ENCODE measurements at regions of chr12 and their contacts with region 1.

Region 1: GRCh38 chr12:92505254-92506231 is 197.2 kb upstream of the PLEKHG7 start:
- DNase-seq: peak; percentile 86
- ATAC-seq: peak; percentile 41
- H3K4me3 ChIP-seq: peak overlapping the region; percentile 46
- H3K27ac ChIP-seq: peak overlapping the region; percentile 100
- H3K4me1 ChIP-seq: peaks cover 53% of the 10 kb centered on the region
- H3K27me3 ChIP-seq: no peaks in the 10 kb centered on the region
- CTCF ChIP-seq: no peak
- EP300 ChIP-seq: peak; percentile 15 to 44; a peak in 2 of 4 replicates
- POLR2A ChIP-seq: peak; percentile 56; the same call in 1 of the 2 replicates
- RAD21 ChIP-seq: no peak

Region 2: DNA sequence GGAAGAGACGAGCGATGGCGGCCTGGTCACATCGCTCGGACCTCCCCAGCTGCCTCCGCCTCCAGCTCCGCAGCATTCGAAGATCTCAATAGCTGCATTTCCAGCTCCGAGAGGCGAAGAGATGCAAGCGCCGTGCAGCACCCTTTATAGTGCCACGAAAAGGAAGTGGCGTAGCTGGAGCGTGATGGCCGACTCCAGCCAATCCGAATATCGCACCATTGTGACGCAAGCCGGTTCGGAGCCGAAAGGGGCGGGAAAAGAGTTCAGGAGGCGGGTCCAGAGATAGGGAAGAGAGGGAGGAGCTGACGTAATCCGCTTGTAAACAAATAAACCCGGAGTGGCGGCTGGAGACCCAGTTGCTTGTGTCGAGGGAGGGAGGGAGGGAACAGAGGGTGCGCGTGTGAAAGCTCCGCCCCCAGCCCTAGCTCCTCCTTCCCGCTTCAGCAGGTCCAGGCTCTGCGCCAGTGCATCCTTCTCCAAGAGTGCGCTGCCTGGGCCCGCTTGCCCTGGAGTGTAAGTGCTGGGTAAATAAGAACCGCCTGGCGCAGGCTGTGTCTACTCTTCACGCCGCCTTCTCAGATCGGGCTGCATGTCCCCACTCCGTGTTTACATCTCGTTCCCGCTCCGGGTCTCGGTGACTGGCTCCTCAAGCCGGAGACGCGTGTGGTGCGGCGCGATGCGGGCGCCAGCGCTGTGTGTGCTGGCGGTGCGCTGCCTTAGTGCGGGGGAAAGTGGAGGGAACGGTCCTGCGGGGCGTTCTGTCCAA is 359.6 kb before region 1 on chr12 and contains the start of gene BTG1:
- CTCF ChIA-PET with region 1: interaction called, 6 read pairs
- POLR2A ChIA-PET with region 1: interaction called, 24 read pairs
- RAD21 ChIA-PET with region 1: interaction called, 33 read pairs
- SMC1A ChIA-PET with region 1: interaction called, 18 read pairs
- in situ Hi-C with region 1: no loop called
- intact Hi-C with region 1: loop called (anchors 2 kb)
- DNase-seq: peak; percentile 100
- ATAC-seq: peak; percentile 72
- H3K4me3 ChIP-seq: peak within 1 kb of the TSS; percentile 89
- H3K27ac ChIP-seq: peak within 1 kb of the TSS; percentile 94
- H3K4me1 ChIP-seq: peaks cover 8% of the 10 kb centered on the region
- H3K27me3 ChIP-seq: no peaks in the 10 kb centered on the region
- CTCF ChIP-seq: no peak
- EP300 ChIP-seq: no peak; a peak in 2 of 4 replicates
- POLR2A ChIP-seq: peak; percentile 97
- RAD21 ChIP-seq: 0 out of 2 replicates have a peak, but pooled peaks have one; percentile 5
- polyA plus RNA-seq, gene BTG1: 23.7 to 61.5 TPM

Region 3: DNA sequence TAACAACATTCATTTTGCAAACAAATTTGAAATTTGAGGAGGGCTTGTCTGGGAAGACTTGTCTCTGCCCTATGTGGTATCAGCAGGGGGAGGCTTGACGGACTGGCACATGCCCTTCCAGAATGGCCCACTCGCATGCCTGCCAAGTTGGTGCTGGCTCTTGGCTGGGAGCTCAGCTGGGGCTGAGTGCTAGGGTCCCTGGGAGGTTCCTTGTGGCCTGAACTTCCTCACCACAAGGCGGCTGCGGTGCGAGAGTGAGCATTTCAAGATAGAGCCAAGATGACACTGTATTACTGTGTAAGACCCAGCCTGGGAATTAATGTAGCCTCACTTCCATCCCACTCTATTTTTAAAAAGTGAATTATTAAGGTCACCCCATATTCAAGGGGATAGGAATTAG is 74.4 kb before region 1 on chr12:
- CTCF ChIA-PET with region 1: interaction called, 6 read pairs
- POLR2A ChIA-PET with region 1: interaction called, 6 read pairs
- RAD21 ChIA-PET with region 1: interaction called, 52 read pairs
- SMC1A ChIA-PET with region 1: interaction called, 79 read pairs
- in situ Hi-C with region 1: no loop called
- intact Hi-C with region 1: loop called (anchors 5 kb)
- DNase-seq: no peak
- ATAC-seq: peak; percentile 64
- H3K4me3 ChIP-seq: no peak overlapping the region
- H3K27ac ChIP-seq: peak overlapping the region; percentile 10
- H3K4me1 ChIP-seq: peaks cover 46% of the 10 kb centered on the region
- H3K27me3 ChIP-seq: no peaks in the 10 kb centered on the region
- CTCF ChIP-seq: peak; percentile 6 to 42 (median 40); a peak in 3 of 6 replicates
- EP300 ChIP-seq: no peak
- POLR2A ChIP-seq: no peak
- RAD21 ChIP-seq: peak; percentile 61

Region 4: GRCh38 chr12:92478692-92479091 is 26.9 kb before region 1 on chr12:
- CTCF ChIA-PET with region 1: interaction called, 6 read pairs
- POLR2A ChIA-PET with region 1: interaction called, 26 read pairs
- RAD21 ChIA-PET with region 1: interaction called, 36 read pairs
- SMC1A ChIA-PET with region 1: interaction called, 292 read pairs
- in situ Hi-C with region 1: no loop called
- intact Hi-C with region 1: no loop called
- DNase-seq: no peak
- ATAC-seq: no peak; the same call in 2 of the 3 replicates
- H3K4me3 ChIP-seq: no peak overlapping the region
- H3K27ac ChIP-seq: no peak overlapping the region
- H3K4me1 ChIP-seq: peaks cover 9% of the 10 kb centered on the region; the same call in 1 of the 2 replicates
- H3K27me3 ChIP-seq: no peaks in the 10 kb centered on the region
- CTCF ChIP-seq: no peak
- EP300 ChIP-seq: no peak
- POLR2A ChIP-seq: no peak
- RAD21 ChIP-seq: no peak

Region 5: GRCh38 chr12:92524489-92524888 is 18.9 kb after region 1 on chr12:
- CTCF ChIA-PET with region 1: interaction called, 5 read pairs
- POLR2A ChIA-PET with region 1: interaction called, 10 read pairs
- RAD21 ChIA-PET with region 1: interaction called, 14 read pairs
- SMC1A ChIA-PET with region 1: interaction called, 36 read pairs
- in situ Hi-C with region 1: no loop called
- intact Hi-C with region 1: no loop called
- DNase-seq: no peak
- ATAC-seq: no peak
- H3K4me3 ChIP-seq: no peak overlapping the region
- H3K27ac ChIP-seq: no peak overlapping the region
- H3K4me1 ChIP-seq: no peaks in the 10 kb centered on the region
- H3K27me3 ChIP-seq: no peaks in the 10 kb centered on the region
- CTCF ChIP-seq: no peak
- EP300 ChIP-seq: no peak
- POLR2A ChIP-seq: no peak
- RAD21 ChIP-seq: no peak

Region 6: GRCh38 chr12:92551853-92552397 is 46.4 kb after region 1 on chr12:
- CTCF ChIA-PET with region 1: interaction called, 61 read pairs
- POLR2A ChIA-PET with region 1: interaction called, 170 read pairs
- RAD21 ChIA-PET with region 1: interaction called, 356 read pairs
- SMC1A ChIA-PET with region 1: interaction called, 805 read pairs
- in situ Hi-C with region 1: no loop called
- intact Hi-C with region 1: loop called (anchors 2 kb)
- DNase-seq: peak; percentile 98
- ATAC-seq: peak; percentile 75
- H3K4me3 ChIP-seq: peak overlapping the region; percentile 17; the same call in 1 of the 2 replicates
- H3K27ac ChIP-seq: peak overlapping the region; percentile 98
- H3K4me1 ChIP-seq: peaks cover 67% of the 10 kb centered on the region
- H3K27me3 ChIP-seq: no peaks in the 10 kb centered on the region
- CTCF ChIP-seq: no peak
- EP300 ChIP-seq: peak; percentile 92 to 97
- POLR2A ChIP-seq: peak; percentile 57
- RAD21 ChIP-seq: no peak

Region 7: DNA sequence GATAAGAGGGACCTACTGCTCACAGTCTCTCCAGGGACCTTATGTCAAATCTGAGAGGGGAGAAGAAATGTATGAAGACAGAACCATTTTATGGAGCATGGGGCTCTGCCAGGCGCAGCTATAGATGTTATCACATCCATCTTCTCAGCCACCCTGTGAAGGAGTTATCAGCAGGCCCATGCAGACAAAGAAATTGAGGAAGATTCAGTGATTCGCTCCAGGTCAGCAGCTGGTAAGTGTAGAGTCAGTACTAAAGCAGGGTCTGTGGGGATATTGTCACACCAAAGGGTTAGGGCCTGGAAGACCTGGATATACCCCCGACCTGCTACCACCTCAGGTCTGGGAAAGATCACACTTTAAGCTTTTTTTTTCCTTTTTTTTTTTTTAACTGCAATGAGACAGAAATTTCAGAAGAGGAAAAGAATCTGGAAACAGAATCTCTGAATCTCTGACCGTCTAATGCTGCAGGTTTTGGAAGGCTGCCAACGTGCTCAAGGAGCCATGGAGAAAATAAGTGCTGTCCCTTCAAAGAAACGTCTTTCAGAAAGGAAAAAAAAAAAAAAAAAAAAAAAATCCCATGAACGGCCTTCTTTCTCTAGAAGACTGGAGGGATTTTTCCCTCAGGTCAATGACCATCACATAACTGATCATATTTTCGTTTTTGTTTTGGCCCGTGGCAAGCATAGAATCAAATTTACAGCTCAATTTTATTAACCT is 124.0 kb after region 1 on chr12:
- CTCF ChIA-PET with region 1: no interaction called
- POLR2A ChIA-PET with region 1: no interaction called
- RAD21 ChIA-PET with region 1: no interaction called
- SMC1A ChIA-PET with region 1: no interaction called
- in situ Hi-C with region 1: no loop called
- intact Hi-C with region 1: no loop called
- DNase-seq: no peak
- ATAC-seq: no peak
- H3K4me3 ChIP-seq: no peak overlapping the region
- H3K27ac ChIP-seq: no peak overlapping the region
- H3K4me1 ChIP-seq: no peaks in the 10 kb centered on the region
- H3K27me3 ChIP-seq: no peaks in the 10 kb centered on the region
- CTCF ChIP-seq: no peak
- EP300 ChIP-seq: no peak
- POLR2A ChIP-seq: no peak
- RAD21 ChIP-seq: no peak